ENCODE measurements at regions of chr3 and their contacts with region 1.

Region 1: GRCh38 chr3:46965151-46965550 is 11.4 kb downstream of the CCDC12 start:
- DNase-seq: no peak
- ATAC-seq: no peak; the same call in 1 of the 2 replicates
- H3K4me3 ChIP-seq: no peak overlapping the region
- H3K27ac ChIP-seq: no peak overlapping the region
- H3K4me1 ChIP-seq: peaks cover 19% of the 10 kb centered on the region; the same call in 1 of the 2 replicates
- H3K27me3 ChIP-seq: no peaks in the 10 kb centered on the region
- CTCF ChIP-seq: no peak
- POLR2A ChIP-seq: no peak
- RAD21 ChIP-seq: no peak

Region 2: DNA sequence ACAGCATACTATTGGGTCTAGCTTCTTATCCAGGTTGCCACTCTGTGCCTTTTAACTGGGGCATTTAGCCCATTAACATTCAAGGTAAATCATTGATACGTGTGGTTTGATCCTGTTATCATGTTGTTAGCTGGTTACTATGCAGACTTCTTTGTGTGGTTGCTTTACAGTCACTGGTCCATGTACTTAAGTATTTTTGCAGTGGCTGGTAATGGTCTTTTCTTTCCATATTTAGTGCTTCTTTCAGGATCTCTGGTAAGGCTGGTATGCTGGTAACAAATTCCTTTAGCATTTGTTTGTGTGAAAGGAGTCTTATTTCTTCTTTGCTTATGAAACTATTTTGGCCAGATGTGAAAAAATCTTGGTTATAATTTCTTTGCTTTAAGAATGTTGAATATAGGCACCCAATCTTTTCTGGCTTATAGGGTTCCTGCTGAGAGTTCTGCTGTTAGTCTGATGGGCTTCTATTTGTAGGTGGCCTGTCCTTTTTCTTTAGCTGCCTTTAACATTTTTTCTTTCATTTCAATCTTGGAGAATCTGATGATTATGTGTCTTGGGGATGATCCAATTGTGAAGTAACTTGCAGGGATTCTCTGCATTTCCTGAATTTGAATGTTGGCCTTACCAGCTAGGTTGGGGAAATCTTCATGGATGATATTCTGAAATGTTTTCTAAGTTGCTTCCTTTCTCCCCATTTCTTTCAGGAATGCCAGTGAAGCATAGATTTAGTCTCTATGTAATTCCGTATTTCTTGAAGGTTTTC is 796.4 kb before region 1 on chr3:
- CTCF ChIA-PET with region 1: no interaction called
- POLR2A ChIA-PET with region 1: no interaction called
- dilution Hi-C with region 1: no loop called
- in situ Hi-C with region 1: no loop called
- intact Hi-C with region 1: no loop called
- DNase-seq: peak; percentile 18
- ATAC-seq: peak; percentile 76
- H3K4me3 ChIP-seq: no peak overlapping the region
- H3K27ac ChIP-seq: no peak overlapping the region
- H3K4me1 ChIP-seq: no peaks in the 10 kb centered on the region
- H3K27me3 ChIP-seq: peaks cover 4% of the 10 kb centered on the region; the same call in 1 of the 2 replicates
- CTCF ChIP-seq: no peak
- POLR2A ChIP-seq: no peak
- RAD21 ChIP-seq: no peak

Region 3: DNA sequence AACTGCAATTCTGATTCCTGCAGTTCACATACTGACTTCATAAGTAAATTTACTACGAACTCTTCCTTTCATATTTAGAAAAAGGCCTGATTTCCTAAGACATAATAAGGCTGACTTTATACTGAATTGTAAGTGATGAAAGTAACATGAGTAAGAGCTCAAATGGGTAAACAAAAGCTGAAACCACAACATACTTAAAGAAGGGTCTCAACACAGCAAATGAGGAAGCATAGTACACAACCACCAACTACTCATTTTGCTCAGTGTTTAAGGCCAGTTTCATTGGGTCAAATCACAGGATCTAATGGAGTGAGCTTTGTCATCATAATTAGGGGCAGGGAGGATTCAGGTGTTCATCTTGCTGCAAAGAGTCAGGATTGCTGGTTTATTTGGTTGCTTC is 117.4 kb after region 1 on chr3:
- CTCF ChIA-PET with region 1: no interaction called
- POLR2A ChIA-PET with region 1: interaction called, 17 read pairs
- dilution Hi-C with region 1: no loop called
- in situ Hi-C with region 1: no loop called
- intact Hi-C with region 1: no loop called
- DNase-seq: peak; percentile 89
- ATAC-seq: peak; percentile 94
- H3K4me3 ChIP-seq: no peak overlapping the region
- H3K27ac ChIP-seq: no peak overlapping the region
- H3K4me1 ChIP-seq: peaks cover 10% of the 10 kb centered on the region
- H3K27me3 ChIP-seq: no peaks in the 10 kb centered on the region
- CTCF ChIP-seq: no peak
- POLR2A ChIP-seq: no peak
- RAD21 ChIP-seq: 0 out of 2 replicates have a peak, but pooled peaks have one; percentile 1